ENCODE measurements at regions of chr16 and their contacts with region 1.

Region 1: DNA sequence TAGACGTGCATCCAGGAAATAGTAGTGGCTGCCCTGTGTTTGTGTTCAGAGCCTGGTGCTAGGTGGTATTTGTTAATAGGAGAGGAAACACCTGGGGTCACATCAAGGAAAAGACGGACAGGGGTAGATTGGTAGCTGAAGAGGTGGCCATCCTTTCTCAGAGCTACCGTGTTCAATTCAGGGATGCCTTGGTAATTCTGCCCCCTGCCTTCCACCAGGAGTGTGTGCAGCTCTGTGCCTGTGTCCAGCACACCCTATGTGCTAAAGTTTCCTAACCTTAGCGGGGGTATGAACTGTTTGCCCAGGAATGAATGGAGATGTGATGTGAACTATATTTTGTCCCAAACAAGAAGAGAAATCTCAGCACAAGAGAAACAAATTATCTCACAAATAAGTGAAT is 174.1 kb upstream of the MPHOSPH6 start:
- DNase-seq: no peak
- ATAC-seq: no peak
- H3K4me3 ChIP-seq: no peak overlapping the region
- H3K4me3 Mint-ChIP-seq: no peak overlapping the region
- H3K27ac ChIP-seq: no peak overlapping the region
- H3K27ac Mint-ChIP-seq: no peak overlapping the region
- H3K4me1 ChIP-seq: no peaks in the 10 kb centered on the region
- H3K4me1 Mint-ChIP-seq: no peaks in the 10 kb centered on the region
- H3K27me3 ChIP-seq: no peaks in the 10 kb centered on the region
- H3K27me3 Mint-ChIP-seq: peaks cover 0 to 28% (median 21%) of the 10 kb centered on the region in 5 donors

Region 2: GRCh38 chr16:82295290-82296201 is 48.6 kb before region 1 on chr16:
- CTCF ChIA-PET with region 1: no interaction called
- POLR2A ChIA-PET with region 1: no interaction called
- intact Hi-C with region 1: loop called in 1 of 2 experiments (anchors 2 kb)
- DNase-seq: no peak
- ATAC-seq: no peak
- H3K4me3 ChIP-seq: no peak overlapping the region
- H3K4me3 Mint-ChIP-seq: no peak overlapping the region
- H3K27ac ChIP-seq: no peak overlapping the region
- H3K27ac Mint-ChIP-seq: no peak overlapping the region
- H3K4me1 ChIP-seq: no peaks in the 10 kb centered on the region
- H3K4me1 Mint-ChIP-seq: no peaks in the 10 kb centered on the region
- H3K27me3 ChIP-seq: no peaks in the 10 kb centered on the region
- H3K27me3 Mint-ChIP-seq: peaks cover 0 to 14% (median 6%) of the 10 kb centered on the region in 5 donors

Region 3: DNA sequence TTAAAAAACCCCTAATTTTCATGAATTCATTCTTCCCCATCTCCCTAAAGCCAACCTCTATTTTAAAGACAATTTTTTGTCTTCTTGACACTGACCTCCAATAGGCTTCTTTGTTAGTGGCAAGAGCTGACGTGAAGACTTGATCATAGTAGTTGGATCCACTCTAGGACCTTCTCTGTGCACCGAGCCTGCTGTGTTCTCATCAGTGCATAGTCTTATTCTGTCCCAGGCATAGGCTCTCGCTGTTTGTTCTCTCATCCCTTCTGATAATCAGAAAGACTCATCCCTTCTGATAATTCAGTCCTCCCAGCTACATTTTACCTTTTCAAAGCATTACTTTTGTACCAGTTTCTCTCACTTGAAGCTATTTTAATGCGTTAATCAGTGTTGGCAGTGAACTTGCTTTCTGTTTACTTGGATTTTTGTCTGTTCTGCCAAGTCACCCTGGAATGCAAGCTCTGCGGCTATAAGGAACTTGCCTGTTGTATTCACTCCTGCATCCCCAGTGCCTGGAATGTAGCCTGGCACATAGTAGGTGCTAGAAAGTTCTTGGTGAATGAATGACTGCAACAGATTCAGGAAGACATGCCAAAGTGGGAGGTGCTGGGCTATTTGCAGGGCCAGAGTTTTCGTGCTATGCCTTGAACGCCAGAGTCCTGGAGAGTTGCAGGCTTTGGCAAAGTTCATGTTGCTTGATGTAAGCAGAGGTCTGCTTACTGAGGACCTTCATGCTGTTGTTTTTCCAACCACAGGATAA is 26.6 kb before region 1 on chr16:
- CTCF ChIA-PET with region 1: no interaction called
- POLR2A ChIA-PET with region 1: no interaction called
- intact Hi-C with region 1: loop called in 1 of 2 experiments (anchors 1 kb)
- DNase-seq: no peak
- ATAC-seq: no peak
- H3K4me3 ChIP-seq: no peak overlapping the region
- H3K4me3 Mint-ChIP-seq: no peak overlapping the region
- H3K27ac ChIP-seq: no peak overlapping the region
- H3K27ac Mint-ChIP-seq: no peak overlapping the region
- H3K4me1 ChIP-seq: no peaks in the 10 kb centered on the region
- H3K4me1 Mint-ChIP-seq: no peaks in the 10 kb centered on the region
- H3K27me3 ChIP-seq: no peaks in the 10 kb centered on the region
- H3K27me3 Mint-ChIP-seq: peaks cover 0 to 26% (median 10%) of the 10 kb centered on the region in 5 donors

Region 4: GRCh38 chr16:82358568-82359221 is 14.5 kb after region 1 on chr16:
- CTCF ChIA-PET with region 1: no interaction called
- POLR2A ChIA-PET with region 1: no interaction called
- intact Hi-C with region 1: no loop called
- DNase-seq: no peak
- ATAC-seq: no peak
- H3K4me3 ChIP-seq: no peak overlapping the region
- H3K4me3 Mint-ChIP-seq: no peak overlapping the region
- H3K27ac ChIP-seq: no peak overlapping the region
- H3K27ac Mint-ChIP-seq: no peak overlapping the region
- H3K4me1 ChIP-seq: no peaks in the 10 kb centered on the region
- H3K4me1 Mint-ChIP-seq: no peaks in the 10 kb centered on the region
- H3K27me3 ChIP-seq: no peaks in the 10 kb centered on the region
- H3K27me3 Mint-ChIP-seq: peaks cover 0 to 30% (median 11%) of the 10 kb centered on the region in 5 donors

Region 5: GRCh38 chr16:82405736-82406135 is 61.6 kb after region 1 on chr16:
- CTCF ChIA-PET with region 1: no interaction called
- POLR2A ChIA-PET with region 1: no interaction called
- intact Hi-C with region 1: no loop called
- DNase-seq: no peak
- ATAC-seq: no peak
- H3K4me3 ChIP-seq: no peak overlapping the region
- H3K4me3 Mint-ChIP-seq: no peak overlapping the region
- H3K27ac ChIP-seq: no peak overlapping the region
- H3K27ac Mint-ChIP-seq: no peak overlapping the region
- H3K4me1 ChIP-seq: no peaks in the 10 kb centered on the region
- H3K4me1 Mint-ChIP-seq: no peaks in the 10 kb centered on the region
- H3K27me3 ChIP-seq: no peaks in the 10 kb centered on the region
- H3K27me3 Mint-ChIP-seq: peaks cover 2 to 39% (median 28%) of the 10 kb centered on the region in 5 donors

Region 6: DNA sequence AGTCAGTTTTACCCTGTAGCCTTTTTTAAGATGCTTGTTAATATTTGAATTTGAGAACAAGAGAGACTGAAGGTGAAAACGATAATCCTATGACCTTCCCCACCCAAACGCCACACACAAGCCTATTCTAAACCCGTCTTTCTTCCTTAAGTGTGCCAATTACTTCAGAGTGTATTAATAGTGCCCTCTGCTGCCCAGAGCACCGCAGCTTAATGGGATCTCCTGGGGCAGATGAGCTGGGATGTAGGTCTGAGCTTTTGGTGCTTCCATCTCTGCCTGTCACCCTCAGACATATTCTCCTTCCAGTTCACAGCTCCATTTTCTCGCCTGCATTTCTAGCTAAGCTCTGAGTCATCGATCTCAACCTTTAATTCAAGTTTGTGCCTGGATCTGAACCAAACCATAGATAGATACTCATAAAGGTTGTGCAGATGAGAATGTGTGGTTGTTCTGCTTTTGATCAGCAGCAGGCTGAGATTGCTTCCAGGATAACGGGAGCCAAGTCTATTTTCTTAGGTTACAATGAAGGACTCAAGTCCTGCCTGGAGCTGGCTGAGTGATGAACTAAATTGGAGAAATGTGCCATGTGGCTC is 236.2 kb after region 1 on chr16:
- CTCF ChIA-PET with region 1: no interaction called
- POLR2A ChIA-PET with region 1: no interaction called
- intact Hi-C with region 1: no loop called
- DNase-seq: no peak
- ATAC-seq: no peak
- H3K4me3 ChIP-seq: no peak overlapping the region
- H3K4me3 Mint-ChIP-seq: no peak overlapping the region
- H3K27ac ChIP-seq: no peak overlapping the region
- H3K27ac Mint-ChIP-seq: no peak overlapping the region
- H3K4me1 ChIP-seq: no peaks in the 10 kb centered on the region
- H3K4me1 Mint-ChIP-seq: no peaks in the 10 kb centered on the region
- H3K27me3 ChIP-seq: no peaks in the 10 kb centered on the region
- H3K27me3 Mint-ChIP-seq: peaks cover 0 to 18% (median 6%) of the 10 kb centered on the region in 5 donors